Common myeloid progenitor, CD34-positive (primary cell): ENCODE measurements at regions of chr5 and their contacts with region 1.

Region 1: DNA sequence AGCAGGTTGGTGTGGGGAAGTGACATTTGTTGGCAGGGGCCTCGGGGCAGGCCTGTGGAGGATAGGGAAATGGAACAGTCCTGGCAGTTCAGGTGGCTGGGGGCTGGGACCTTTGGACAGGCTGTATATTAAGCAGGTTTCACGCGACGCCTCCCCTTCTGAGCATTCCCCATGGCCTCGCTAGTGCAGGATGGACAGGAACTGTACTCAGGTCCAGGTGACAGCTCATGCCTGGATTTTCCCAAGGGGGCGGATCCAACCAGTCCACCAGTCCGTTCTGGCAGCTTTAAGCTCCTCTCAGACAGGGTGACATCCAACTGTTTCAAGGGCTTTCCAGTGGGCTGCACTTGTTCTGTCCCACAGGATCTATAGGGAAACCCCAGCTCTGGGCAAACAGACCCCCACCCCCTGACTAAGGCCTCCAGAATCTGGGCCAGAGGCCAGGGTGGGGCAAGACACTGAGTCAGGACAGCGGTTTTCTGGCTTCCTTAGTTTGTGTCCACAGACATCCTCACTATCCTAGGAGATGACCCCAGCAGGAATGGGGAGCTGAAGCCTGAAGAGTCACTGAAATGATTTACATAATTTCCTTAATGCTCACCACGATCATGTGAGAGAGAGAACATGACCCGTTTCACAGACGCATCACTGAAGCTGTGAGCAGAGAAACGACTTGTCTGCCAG is 20.9 kb downstream of the CSF2 start:
- DNase-seq: peak in 1 of 3 donors; percentile 38
- H3K4me3 ChIP-seq: no peak overlapping the region
- H3K27ac ChIP-seq: no peak overlapping the region
- H3K4me1 ChIP-seq: peaks cover 5 to 48% (median 26%) of the 10 kb centered on the region in 4 experiments
- H3K27me3 ChIP-seq: no peaks in the 10 kb centered on the region

Region 2: GRCh38 chr5:131867524-131867923 is 227.0 kb before region 1 on chr5:
- CTCF ChIA-PET with region 1: no interaction called
- POLR2A ChIA-PET with region 1: no interaction called
- DNase-seq: no peak
- H3K4me3 ChIP-seq: no peak overlapping the region
- H3K27ac ChIP-seq: no peak overlapping the region
- H3K4me1 ChIP-seq: no peaks in the 10 kb centered on the region
- H3K27me3 ChIP-seq: no peaks in the 10 kb centered on the region

Region 3: GRCh38 chr5:132013006-132013689 is 81.4 kb before region 1 on chr5:
- CTCF ChIA-PET with region 1: no interaction called
- POLR2A ChIA-PET with region 1: no interaction called
- DNase-seq: no peak
- H3K4me3 ChIP-seq: no peak overlapping the region
- H3K27ac ChIP-seq: no peak overlapping the region
- H3K4me1 ChIP-seq: peaks cover 2 to 34% (median 21%) of the 10 kb centered on the region in 4 experiments
- H3K27me3 ChIP-seq: peaks cover 0 to 41% (median 18%) of the 10 kb centered on the region in 5 experiments

Region 4: GRCh38 chr5:132083071-132083678 is 11.4 kb before region 1 on chr5:
- CTCF ChIA-PET with region 1: interaction called, 11 read pairs
- POLR2A ChIA-PET with region 1: interaction called, 3 read pairs
- DNase-seq: no peak
- H3K4me3 ChIP-seq: no peak overlapping the region
- H3K27ac ChIP-seq: no peak overlapping the region
- H3K4me1 ChIP-seq: peaks cover 0 to 17% (median 4%) of the 10 kb centered on the region in 4 experiments
- H3K27me3 ChIP-seq: peaks cover 0 to 2% (median 0%) of the 10 kb centered on the region in 5 experiments